ENCODE measurements at regions of chr2 and their contacts with region 1.

Region 1: DNA sequence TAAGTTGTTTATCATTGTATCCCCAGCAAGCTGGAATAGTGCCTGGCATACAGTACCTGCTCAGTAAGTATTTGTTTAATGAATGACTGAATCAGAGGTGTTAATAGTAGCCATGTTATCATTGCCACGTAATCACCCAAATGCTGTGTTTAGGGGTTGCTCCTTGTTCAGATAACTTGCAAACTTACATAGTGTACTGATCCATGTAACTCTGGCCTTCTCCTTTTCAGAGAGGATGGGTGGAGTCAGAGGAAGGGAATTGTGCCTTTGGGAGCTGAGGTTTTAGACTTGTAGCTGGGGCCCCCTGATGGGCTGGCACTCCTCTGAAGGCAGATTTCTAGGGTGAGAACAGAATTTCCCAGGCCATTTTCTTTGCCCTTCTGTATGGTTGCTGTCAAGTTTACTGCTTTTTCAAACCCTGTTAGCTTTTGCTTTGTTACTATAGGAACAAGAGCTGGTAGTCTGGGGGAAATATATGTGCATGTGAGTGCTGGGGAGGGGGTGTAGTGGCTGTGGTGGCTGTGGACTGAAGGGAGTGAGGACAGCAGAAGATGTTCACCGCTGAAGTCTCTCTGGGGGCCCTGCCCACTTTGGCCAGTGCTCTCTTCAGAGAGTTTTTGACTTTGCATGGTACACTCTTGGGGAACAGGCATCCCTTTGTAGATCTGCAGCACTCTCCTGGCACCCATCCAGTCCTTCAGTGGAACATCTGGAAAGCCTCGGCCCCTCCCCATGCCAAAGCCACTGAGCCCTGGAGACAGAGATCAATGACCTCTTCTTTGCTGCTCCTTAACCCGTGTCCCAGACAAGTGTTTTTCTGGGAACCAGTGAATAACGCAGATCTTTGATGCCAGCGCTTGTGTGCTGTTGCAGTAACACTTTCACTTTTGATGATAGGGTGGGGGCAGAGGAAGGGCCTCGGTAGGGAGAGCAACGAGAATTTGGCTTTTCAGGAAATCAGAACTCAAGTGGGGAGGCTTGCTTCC is 209.0 kb downstream of the PRKCE start:
- DNase-seq: no peak
- H3K4me3 ChIP-seq: no peak overlapping the region
- H3K27ac ChIP-seq: no peak overlapping the region
- H3K4me1 ChIP-seq: no peaks in the 10 kb centered on the region
- H3K27me3 ChIP-seq: no peaks in the 10 kb centered on the region
- CTCF ChIP-seq: no peak

Region 2: GRCh38 chr2:45888167-45888566 is 27.7 kb after region 1 on chr2:
- CTCF ChIA-PET with region 1: no interaction called
- POLR2A ChIA-PET with region 1: interaction called, 14 read pairs
- intact Hi-C with region 1: no loop called
- DNase-seq: peak in 1 of 2 experiments; percentile 67
- H3K4me3 ChIP-seq: no peak overlapping the region
- H3K27ac ChIP-seq: no peak overlapping the region
- H3K4me1 ChIP-seq: peaks cover 6% of the 10 kb centered on the region
- H3K27me3 ChIP-seq: no peaks in the 10 kb centered on the region
- CTCF ChIP-seq: no peak

Region 3: GRCh38 chr2:45993476-45993991 is 133.1 kb after region 1 on chr2:
- CTCF ChIA-PET with region 1: no interaction called
- POLR2A ChIA-PET with region 1: no interaction called
- intact Hi-C with region 1: no loop called
- DNase-seq: peak; percentile 59 to 74
- H3K4me3 ChIP-seq: no peak overlapping the region
- H3K27ac ChIP-seq: peak overlapping the region; percentile 88
- H3K4me1 ChIP-seq: peaks cover 36% of the 10 kb centered on the region
- H3K27me3 ChIP-seq: no peaks in the 10 kb centered on the region
- CTCF ChIP-seq: peak; percentile 95

Measured in PC-9 (cell line).